ENCODE measurements at regions of chr13 and their contacts with region 1.

Region 1: GRCh38 chr13:85806553-85807175 is 7.4 kb upstream of the SLITRK6 start:
- DNase-seq: peak; percentile 17
- ATAC-seq: peak; percentile 82
- H3K4me3 ChIP-seq: no peak overlapping the region
- H3K27ac ChIP-seq: no peak overlapping the region
- H3K4me1 ChIP-seq: no peaks in the 10 kb centered on the region
- H3K27me3 ChIP-seq: no peaks in the 10 kb centered on the region
- CTCF ChIP-seq: peak; percentile 44; the same call in 1 of the 2 replicates

Region 2: DNA sequence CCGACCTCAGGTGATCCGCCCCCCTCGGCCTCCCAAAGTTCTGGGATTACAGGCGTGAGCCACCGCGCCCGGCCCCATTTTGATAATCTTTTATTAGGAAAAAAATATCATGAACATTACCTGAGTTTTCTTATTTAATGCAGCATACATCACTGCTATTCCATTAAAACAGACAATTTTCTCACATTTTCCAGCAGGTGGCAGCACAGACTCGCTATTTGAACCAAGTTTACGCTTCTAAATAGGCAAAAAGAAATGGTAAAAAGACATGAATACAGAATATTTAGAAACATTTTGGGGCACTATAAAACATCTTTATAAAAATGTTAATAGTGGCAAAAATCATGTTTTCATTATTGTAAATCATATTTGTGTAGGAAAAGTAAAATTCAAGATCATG is 910.5 kb before region 1 on chr13:
- CTCF ChIA-PET with region 1: no interaction called
- POLR2A ChIA-PET with region 1: no interaction called
- in situ Hi-C with region 1: no loop called
- intact Hi-C with region 1: loop called (anchors 1 kb)
- DNase-seq: peak; percentile 20
- ATAC-seq: no peak
- H3K4me3 ChIP-seq: no peak overlapping the region
- H3K27ac ChIP-seq: no peak overlapping the region
- H3K4me1 ChIP-seq: no peaks in the 10 kb centered on the region
- H3K27me3 ChIP-seq: no peaks in the 10 kb centered on the region
- CTCF ChIP-seq: peak; percentile 59

Region 3: GRCh38 chr13:84917252-84917878 is 889.3 kb before region 1 on chr13:
- CTCF ChIA-PET with region 1: no interaction called
- POLR2A ChIA-PET with region 1: no interaction called
- in situ Hi-C with region 1: no loop called
- intact Hi-C with region 1: loop called (anchors 2 kb)
- DNase-seq: no peak
- ATAC-seq: no peak
- H3K4me3 ChIP-seq: no peak overlapping the region
- H3K27ac ChIP-seq: no peak overlapping the region
- H3K4me1 ChIP-seq: no peaks in the 10 kb centered on the region
- H3K27me3 ChIP-seq: no peaks in the 10 kb centered on the region
- CTCF ChIP-seq: peak; percentile 8; the same call in 1 of the 2 replicates

Region 4: GRCh38 chr13:85068231-85068630 is 738.4 kb before region 1 on chr13:
- CTCF ChIA-PET with region 1: no interaction called
- POLR2A ChIA-PET with region 1: no interaction called
- in situ Hi-C with region 1: no loop called
- intact Hi-C with region 1: no loop called
- DNase-seq: no peak
- ATAC-seq: no peak
- H3K4me3 ChIP-seq: no peak overlapping the region
- H3K27ac ChIP-seq: no peak overlapping the region
- H3K4me1 ChIP-seq: no peaks in the 10 kb centered on the region
- H3K27me3 ChIP-seq: no peaks in the 10 kb centered on the region
- CTCF ChIP-seq: no peak

Region 5: GRCh38 chr13:85508683-85509329 is 297.9 kb before region 1 on chr13:
- CTCF ChIA-PET with region 1: no interaction called
- POLR2A ChIA-PET with region 1: no interaction called
- in situ Hi-C with region 1: no loop called
- intact Hi-C with region 1: loop called (anchors 10 kb)
- DNase-seq: no peak
- ATAC-seq: no peak
- H3K4me3 ChIP-seq: no peak overlapping the region
- H3K27ac ChIP-seq: no peak overlapping the region
- H3K4me1 ChIP-seq: no peaks in the 10 kb centered on the region; the same call in 1 of the 2 replicates
- H3K27me3 ChIP-seq: no peaks in the 10 kb centered on the region
- CTCF ChIP-seq: peak; percentile 14; the same call in 1 of the 2 replicates

Region 6: DNA sequence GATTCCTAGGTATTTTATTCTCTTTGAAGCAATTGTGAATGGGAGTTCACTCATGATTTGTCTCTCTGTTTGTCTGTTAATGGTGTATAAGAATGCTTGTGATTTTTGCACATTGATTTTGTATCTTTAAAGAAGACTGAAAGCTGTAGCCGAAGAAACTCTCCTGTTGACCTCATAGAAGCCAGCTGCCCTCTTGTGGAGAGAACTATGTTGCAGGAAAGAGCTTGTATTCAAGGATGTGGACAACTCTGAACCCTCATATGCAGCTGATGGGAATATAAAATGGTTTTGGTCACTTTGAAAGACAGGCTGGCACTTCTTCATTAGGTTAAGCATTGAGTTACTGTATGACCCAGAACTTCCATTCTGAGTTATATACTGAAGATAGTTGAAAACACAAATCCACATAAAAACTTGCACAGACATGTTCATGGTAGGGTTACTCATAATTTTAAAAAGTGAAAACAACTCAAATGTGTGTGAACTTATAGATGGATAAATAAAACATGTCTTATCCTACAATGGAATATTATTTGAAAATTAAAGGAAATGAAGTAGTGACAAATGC is 58.4 kb after region 1 on chr13:
- CTCF ChIA-PET with region 1: no interaction called
- POLR2A ChIA-PET with region 1: no interaction called
- in situ Hi-C with region 1: no loop called
- intact Hi-C with region 1: no loop called
- DNase-seq: no peak
- ATAC-seq: no peak
- H3K4me3 ChIP-seq: no peak overlapping the region
- H3K27ac ChIP-seq: no peak overlapping the region
- H3K4me1 ChIP-seq: no peaks in the 10 kb centered on the region
- H3K27me3 ChIP-seq: no peaks in the 10 kb centered on the region
- CTCF ChIP-seq: peak; percentile 50

Measured in Panc1 (cell line).